WTC11 (cell line): ENCODE measurements at regions of chr17 and their contacts with region 1.

Region 1: GRCh38 chr17:4966844-4967538 is 626 bp downstream of the SPAG7 start:
- DNase-seq: peak; percentile 97
- ATAC-seq: peak; percentile 93
- H3K4me3 Mint-ChIP-seq: no peak overlapping the region
- H3K27ac Mint-ChIP-seq: peak overlapping the region; percentile 90
- H3K4me1 Mint-ChIP-seq: peaks cover 22% of the 10 kb centered on the region
- H3K27me3 Mint-ChIP-seq: peaks cover 10% of the 10 kb centered on the region
- CTCF ChIP-seq: no peak

Region 2: DNA sequence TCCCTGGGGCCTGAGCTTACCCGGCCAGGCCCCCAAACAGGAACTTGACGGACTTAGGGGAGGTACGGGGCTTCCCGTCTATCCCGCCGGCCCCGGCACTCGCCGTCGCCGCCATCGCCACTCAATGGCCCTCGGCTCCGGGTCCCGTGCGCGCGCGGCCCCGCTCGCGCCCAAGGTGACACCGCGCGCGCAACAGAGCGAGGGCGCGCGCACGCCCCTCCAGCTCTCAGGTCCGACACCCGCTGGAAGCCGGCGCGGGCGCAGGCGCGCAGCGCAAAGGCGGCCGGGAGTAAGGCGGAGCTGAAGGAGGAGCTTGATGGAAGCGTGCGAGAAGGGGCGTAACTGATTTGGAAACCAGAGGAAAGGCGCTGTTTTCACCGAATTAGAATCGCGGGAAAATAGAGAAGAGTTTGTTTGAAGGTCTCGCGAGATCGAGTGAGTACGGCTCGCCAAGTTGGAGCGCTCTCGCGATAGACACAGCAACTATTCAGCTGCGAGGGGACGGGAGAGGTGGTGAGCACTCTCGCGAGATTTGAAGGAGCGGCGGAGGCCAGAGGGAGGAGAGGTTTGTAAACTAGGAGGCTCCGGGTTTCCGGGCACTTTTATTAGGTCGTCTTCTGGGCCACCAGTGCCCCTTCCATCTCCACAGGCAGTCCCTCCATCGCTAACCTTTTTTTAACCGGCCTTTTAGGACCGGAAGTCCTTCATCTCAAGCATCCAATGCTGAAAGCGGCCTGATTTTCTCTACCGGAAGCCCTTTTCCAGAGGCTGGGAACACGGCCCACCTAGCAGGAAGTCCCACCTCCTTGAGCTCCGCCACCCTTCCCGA is 27.0 kb before region 1 on chr17 and contains the starts of genes RNF167 and SLC25A11:
- CTCF ChIA-PET with region 1: interaction called, 17 read pairs
- POLR2A ChIA-PET with region 1: interaction called, 38 read pairs
- DNase-seq: peak; percentile 93
- ATAC-seq: peak; percentile 84
- H3K4me3 Mint-ChIP-seq: peak within 1 kb of the TSS; percentile 96
- H3K27ac Mint-ChIP-seq: peak within 1 kb of the TSS; percentile 98
- H3K4me1 Mint-ChIP-seq: peaks cover 25% of the 10 kb centered on the region
- H3K27me3 Mint-ChIP-seq: no peaks in the 10 kb centered on the region
- CTCF ChIP-seq: no peak
- total RNA-seq, gene RNF167: 121 to 143 TPM (median 122 TPM) in 3 replicates
- total RNA-seq, gene SLC25A11: 73.7 to 83.3 TPM (median 76.8 TPM) in 3 replicates

Region 3: DNA sequence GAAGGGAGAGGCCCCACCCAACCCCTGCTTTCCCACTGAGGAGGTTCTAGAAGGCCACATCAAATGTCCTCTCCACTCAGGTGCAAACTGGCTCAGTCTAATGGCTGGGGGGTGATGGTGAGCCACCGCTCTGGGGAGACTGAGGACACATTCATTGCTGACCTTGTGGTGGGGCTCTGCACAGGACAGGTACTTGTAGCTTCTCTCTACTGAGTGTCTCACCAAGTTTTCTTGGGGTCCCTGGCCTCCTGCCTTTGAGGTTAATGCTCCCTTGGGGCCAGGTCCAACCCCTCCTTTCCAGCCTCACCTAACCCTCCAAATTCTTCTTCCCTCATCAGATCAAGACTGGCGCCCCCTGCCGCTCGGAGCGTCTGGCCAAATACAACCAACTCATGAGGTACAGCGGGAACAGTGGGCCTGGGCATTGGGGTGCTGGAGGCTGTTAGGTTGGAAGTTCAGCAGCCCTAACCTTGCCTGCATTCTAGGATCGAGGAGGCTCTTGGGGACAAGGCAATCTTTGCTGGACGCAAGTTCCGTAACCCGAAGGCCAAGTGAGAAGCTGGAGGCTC is 10.4 kb before region 1 on chr17:
- CTCF ChIA-PET with region 1: interaction called, 18 read pairs
- POLR2A ChIA-PET with region 1: interaction called, 18 read pairs
- DNase-seq: peak; percentile 83
- ATAC-seq: peak; percentile 64
- H3K4me3 Mint-ChIP-seq: no peak overlapping the region
- H3K27ac Mint-ChIP-seq: no peak overlapping the region
- H3K4me1 Mint-ChIP-seq: peaks cover 35% of the 10 kb centered on the region
- H3K27me3 Mint-ChIP-seq: no peaks in the 10 kb centered on the region
- CTCF ChIP-seq: peak; percentile 53

Region 4: GRCh38 chr17:4986951-4987766 is 20.2 kb after region 1 on chr17 and contains the start of gene CAMTA2:
- CTCF ChIA-PET with region 1: interaction called, 27 read pairs
- POLR2A ChIA-PET with region 1: interaction called, 10 read pairs
- DNase-seq: peak; percentile 88
- ATAC-seq: peak; percentile 77
- H3K4me3 Mint-ChIP-seq: peak within 1 kb of the TSS; percentile 77
- H3K27ac Mint-ChIP-seq: no peak within 1 kb of the TSS
- H3K4me1 Mint-ChIP-seq: peaks cover 25% of the 10 kb centered on the region
- H3K27me3 Mint-ChIP-seq: peaks cover 44% of the 10 kb centered on the region
- CTCF ChIP-seq: peak; percentile 37
- total RNA-seq, gene CAMTA2: 9.2 to 14.2 TPM (median 12.3 TPM) in 3 replicates